HCT116 (cell line): ENCODE measurements at regions of chr17 and their contacts with region 1.

Region 1: DNA sequence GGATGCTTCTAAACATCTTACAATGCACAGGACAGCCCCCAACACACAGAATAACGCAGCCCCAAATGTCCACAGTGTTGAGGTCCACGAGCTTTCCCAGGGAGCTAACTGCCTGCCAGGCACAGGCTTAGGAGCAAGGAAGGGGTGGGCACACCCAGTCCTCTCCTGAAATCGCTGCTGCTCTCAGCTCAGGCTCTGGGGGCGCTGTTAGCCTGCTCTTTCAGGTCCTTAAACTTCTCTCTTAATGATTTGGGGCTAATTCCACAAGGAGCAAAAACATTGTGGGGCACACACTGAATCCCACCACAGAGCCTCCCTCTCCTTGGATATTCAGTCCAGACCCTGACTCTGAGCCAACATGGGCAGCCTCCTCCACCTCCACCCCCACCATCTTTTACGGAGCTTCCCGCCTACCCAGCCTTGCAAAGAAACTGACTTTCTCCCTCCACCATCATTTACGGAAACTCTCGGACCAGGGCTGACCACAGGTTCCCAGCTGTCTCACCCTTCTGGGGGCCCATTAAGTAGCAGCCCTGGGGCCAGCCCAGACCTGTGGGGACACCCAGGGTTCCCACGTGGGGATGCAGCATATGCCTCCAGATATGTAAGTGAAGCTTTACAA is 1.1 kb downstream of the CD300H start:
- DNase-seq: peak; percentile 57
- ATAC-seq: peak; percentile 75
- H3K4me3 ChIP-seq: no peak overlapping the region
- H3K27ac ChIP-seq: no peak overlapping the region
- H3K4me1 ChIP-seq: peaks cover 14 to 25% of the 10 kb centered on the region in 2 experiments
- H3K27me3 ChIP-seq: peaks cover 10% of the 10 kb centered on the region; the same call in 1 of the 2 replicates
- CTCF ChIP-seq: peak; percentile 84 to 98 (median 97)
- POLR2A ChIP-seq: no peak
- RAD21 ChIP-seq: peak; percentile 86

Region 2: DNA sequence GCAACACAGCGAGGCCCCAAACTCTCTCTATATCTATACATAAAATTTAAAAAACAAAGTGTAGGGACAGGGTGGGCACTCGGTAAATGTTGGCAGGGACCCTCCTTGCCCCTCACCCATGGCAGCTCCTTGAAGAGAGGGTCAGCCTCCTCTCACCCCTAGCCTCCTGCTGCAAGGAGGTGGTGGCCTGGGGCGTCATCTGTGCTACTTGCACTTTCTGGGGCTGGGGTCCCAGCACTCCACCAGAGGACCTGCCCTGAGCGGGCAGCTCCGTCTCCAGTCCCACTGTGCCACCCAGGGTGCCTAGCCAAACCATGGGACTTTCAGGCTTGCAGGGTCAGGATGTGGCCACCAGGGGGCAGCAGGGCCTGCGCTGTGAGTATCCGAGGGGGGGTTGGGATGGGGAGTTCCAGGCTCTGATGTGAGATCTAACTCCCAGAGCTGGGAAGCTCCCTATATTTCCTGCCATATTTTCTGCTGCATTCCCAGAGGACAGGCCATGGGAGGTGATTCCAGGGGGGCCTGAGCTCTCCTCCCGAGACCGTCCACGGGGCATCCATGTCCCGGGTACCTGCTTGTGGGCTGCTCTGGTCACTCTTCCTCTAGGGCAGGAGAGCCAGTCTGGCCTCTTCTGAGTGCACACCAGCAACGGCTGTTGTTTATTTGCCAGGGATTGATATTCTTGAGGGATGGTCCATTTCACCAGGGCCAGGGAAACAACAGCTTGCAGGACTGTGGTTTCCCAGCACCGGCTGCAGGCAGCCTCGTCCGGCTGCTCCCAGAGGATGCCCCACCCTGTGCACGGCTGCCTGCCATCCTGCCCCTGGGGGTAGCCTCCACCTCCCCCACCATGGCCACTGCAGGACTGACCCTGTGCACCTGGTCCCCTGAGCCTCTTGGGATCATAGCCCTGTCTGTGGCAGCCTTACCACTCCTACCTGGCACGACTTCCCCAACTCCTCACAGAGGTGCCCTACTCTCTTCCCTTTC is 197.9 kb before region 1 on chr17:
- CTCF ChIA-PET with region 1: interaction called, 5 read pairs
- POLR2A ChIA-PET with region 1: no interaction called
- RAD21 ChIA-PET with region 1: no interaction called
- intact Hi-C with region 1: loop called (anchors 1 kb)
- DNase-seq: peak; percentile 67
- ATAC-seq: peak; percentile 95
- H3K4me3 ChIP-seq: no peak overlapping the region
- H3K27ac ChIP-seq: no peak overlapping the region
- H3K4me1 ChIP-seq: peaks cover 2 to 13% of the 10 kb centered on the region in 2 experiments; a peak in 2 of 4 replicates
- H3K27me3 ChIP-seq: no peaks in the 10 kb centered on the region
- CTCF ChIP-seq: peak; percentile 96 to 100 (median 99)
- POLR2A ChIP-seq: no peak
- RAD21 ChIP-seq: peak; percentile 94

Region 3: DNA sequence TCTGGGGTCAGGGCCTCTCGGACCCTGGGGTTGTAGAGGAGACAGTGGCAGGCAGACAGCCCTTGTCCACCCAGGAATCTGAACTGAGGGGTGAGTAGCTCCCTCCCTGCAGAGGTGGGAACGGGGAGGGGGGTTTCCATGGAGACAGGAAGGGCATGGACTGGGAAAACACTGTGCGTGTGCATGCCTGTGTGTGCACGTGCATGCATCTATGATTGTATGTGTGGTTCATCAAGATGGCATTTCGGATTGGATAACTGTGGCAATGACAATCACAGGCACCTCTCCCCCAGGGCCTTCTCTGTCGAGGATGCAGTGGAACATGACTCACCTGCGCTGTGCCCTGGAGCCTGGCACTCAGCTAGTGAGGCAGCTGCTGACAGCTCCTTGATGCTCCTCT is 14.2 kb before region 1 on chr17:
- CTCF ChIA-PET with region 1: interaction called, 19 read pairs
- POLR2A ChIA-PET with region 1: interaction called, 3 read pairs
- RAD21 ChIA-PET with region 1: no interaction called
- intact Hi-C with region 1: no loop called
- DNase-seq: no peak
- ATAC-seq: peak; percentile 39; the same call in 1 of the 2 replicates
- H3K4me3 ChIP-seq: no peak overlapping the region
- H3K27ac ChIP-seq: no peak overlapping the region
- H3K4me1 ChIP-seq: no peaks in the 10 kb centered on the region
- H3K27me3 ChIP-seq: peaks cover 23% of the 10 kb centered on the region; the same call in 1 of the 2 replicates
- CTCF ChIP-seq: no peak
- POLR2A ChIP-seq: no peak
- RAD21 ChIP-seq: no peak

Region 4: GRCh38 chr17:74584292-74585060 is 18.2 kb after region 1 on chr17:
- CTCF ChIA-PET with region 1: interaction called, 10 read pairs
- POLR2A ChIA-PET with region 1: interaction called, 4 read pairs
- RAD21 ChIA-PET with region 1: no interaction called
- intact Hi-C with region 1: no loop called
- DNase-seq: no peak
- ATAC-seq: no peak
- H3K4me3 ChIP-seq: no peak overlapping the region
- H3K27ac ChIP-seq: no peak overlapping the region
- H3K4me1 ChIP-seq: no peaks in the 10 kb centered on the region
- H3K27me3 ChIP-seq: peaks cover 28% of the 10 kb centered on the region; the same call in 1 of the 2 replicates
- CTCF ChIP-seq: no peak
- POLR2A ChIP-seq: no peak
- RAD21 ChIP-seq: no peak

Region 5: GRCh38 chr17:74592087-74592990 is 26.1 kb after region 1 on chr17 and contains the start of gene CD300LD:
- CTCF ChIA-PET with region 1: interaction called, 14 read pairs
- POLR2A ChIA-PET with region 1: interaction called, 4 read pairs
- RAD21 ChIA-PET with region 1: no interaction called
- intact Hi-C with region 1: no loop called
- DNase-seq: no peak
- ATAC-seq: no peak; the same call in 1 of the 2 replicates
- H3K4me3 ChIP-seq: no peak within 1 kb of the TSS
- H3K27ac ChIP-seq: no peak within 1 kb of the TSS
- H3K4me1 ChIP-seq: no peaks in the 10 kb centered on the region
- H3K27me3 ChIP-seq: peaks cover 66% of the 10 kb centered on the region
- CTCF ChIP-seq: no peak
- POLR2A ChIP-seq: no peak
- RAD21 ChIP-seq: no peak
- total RNA-seq, gene CD300LD: not detected

Region 6: GRCh38 chr17:74646231-74646630 is 80.0 kb after region 1 on chr17:
- CTCF ChIA-PET with region 1: no interaction called
- POLR2A ChIA-PET with region 1: no interaction called
- RAD21 ChIA-PET with region 1: no interaction called
- intact Hi-C with region 1: loop called (anchors 1 kb)
- DNase-seq: peak; percentile 54
- ATAC-seq: peak; percentile 86
- H3K4me3 ChIP-seq: no peak overlapping the region
- H3K27ac ChIP-seq: no peak overlapping the region
- H3K4me1 ChIP-seq: no peaks in the 10 kb centered on the region
- H3K27me3 ChIP-seq: peaks cover 79% of the 10 kb centered on the region
- CTCF ChIP-seq: peak; percentile 65 to 75 (median 66); a peak in 5 of 6 replicates
- POLR2A ChIP-seq: no peak
- RAD21 ChIP-seq: peak; percentile 71

Region 7: GRCh38 chr17:74736513-74737298 is 170.5 kb after region 1 on chr17 and contains the start of gene RAB37:
- CTCF ChIA-PET with region 1: interaction called, 36 read pairs
- POLR2A ChIA-PET with region 1: no interaction called
- RAD21 ChIA-PET with region 1: interaction called, 3 to 4 read pairs
- intact Hi-C with region 1: loop called (anchors 1 kb)
- DNase-seq: peak; percentile 47
- ATAC-seq: peak; percentile 79
- H3K4me3 ChIP-seq: peak within 1 kb of the TSS; percentile 69 to 76
- H3K27ac ChIP-seq: peak within 1 kb of the TSS; percentile 68
- H3K4me1 ChIP-seq: peaks cover 20 to 27% of the 10 kb centered on the region in 2 experiments
- H3K27me3 ChIP-seq: no peaks in the 10 kb centered on the region
- CTCF ChIP-seq: peak; percentile 62 to 84 (median 72)
- POLR2A ChIP-seq: peak; percentile 25
- RAD21 ChIP-seq: peak; percentile 82
- total RNA-seq, gene RAB37: 8.2 TPM